Heart left ventricle (tissue), 16 donors: ENCODE measurements at regions of chr11 and their contacts with region 1.

Region 1: GRCh38 chr11:59822989-59823566 is 12.5 kb upstream of the MRPL16 start:
- DNase-seq: peak in 1 of 5 donors; percentile 30
- ATAC-seq: peak in 3 of 4 donors; percentile 86 to 88 (median 87)
- H3K4me3 ChIP-seq: no peak overlapping the region
- H3K27ac ChIP-seq: no peak overlapping the region
- H3K4me1 ChIP-seq: peaks cover 0 to 15% (median 0%) of the 10 kb centered on the region in 12 donors
- H3K27me3 ChIP-seq: no peaks in the 10 kb centered on the region
- CTCF ChIP-seq: peak; percentile 46 to 70 (median 63)
- POLR2A ChIP-seq: no peak

Region 2: DNA sequence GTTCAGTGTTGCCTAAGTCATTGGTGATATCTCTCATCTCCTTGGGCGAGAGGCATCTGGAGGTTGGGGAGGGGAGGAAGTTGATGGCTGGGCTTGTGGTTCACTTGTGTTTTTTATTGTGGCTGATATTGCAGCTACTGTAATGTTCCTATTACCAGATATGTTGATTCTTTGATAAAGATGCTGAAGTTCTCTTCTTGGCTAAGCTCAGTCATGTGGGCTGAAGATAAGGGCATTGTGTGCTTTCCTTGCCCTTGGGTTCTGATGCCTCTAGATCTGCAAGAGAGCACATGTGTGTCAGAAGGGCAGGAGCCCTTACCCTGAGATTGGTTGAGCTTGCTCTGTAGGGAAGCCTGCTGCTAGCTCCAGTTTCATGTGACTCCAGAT is 55.9 kb before region 1 on chr11:
- intact Hi-C with region 1: no loop called
- DNase-seq: no peak
- ATAC-seq: peak in 1 of 4 donors; percentile 19
- H3K4me3 ChIP-seq: no peak overlapping the region
- H3K27ac ChIP-seq: peak overlapping the region in 4 of 12 donors; percentile 11 to 54 (median 27)
- H3K4me1 ChIP-seq: peaks cover 0 to 69% (median 44%) of the 10 kb centered on the region in 12 donors
- H3K27me3 ChIP-seq: no peaks in the 10 kb centered on the region
- CTCF ChIP-seq: no peak
- POLR2A ChIP-seq: no peak

Region 3: GRCh38 chr11:59918987-59919589 is 96.0 kb after region 1 on chr11:
- intact Hi-C with region 1: loop called in 5 of 10 experiments (anchors 5 to 10 kb)
- DNase-seq: no peak
- ATAC-seq: no peak
- H3K4me3 ChIP-seq: no peak overlapping the region
- H3K27ac ChIP-seq: no peak overlapping the region
- H3K4me1 ChIP-seq: no peaks in the 10 kb centered on the region
- H3K27me3 ChIP-seq: no peaks in the 10 kb centered on the region
- CTCF ChIP-seq: peak in 10 of 12 donors; percentile 8 to 47 (median 37)
- POLR2A ChIP-seq: no peak

Region 4: GRCh38 chr11:60130496-60130895 is 307.4 kb after region 1 on chr11:
- intact Hi-C with region 1: loop called in 8 of 10 experiments (anchors 2 to 10 kb)
- DNase-seq: no peak
- ATAC-seq: peak in 2 of 4 donors; percentile 45 to 58
- H3K4me3 ChIP-seq: no peak overlapping the region
- H3K27ac ChIP-seq: no peak overlapping the region
- H3K4me1 ChIP-seq: no peaks in the 10 kb centered on the region
- H3K27me3 ChIP-seq: no peaks in the 10 kb centered on the region
- CTCF ChIP-seq: peak in 10 of 12 donors; percentile 6 to 45 (median 32)
- POLR2A ChIP-seq: no peak

Region 5: GRCh38 chr11:60193687-60194433 is 370.8 kb after region 1 on chr11:
- intact Hi-C with region 1: loop called in 6 of 10 experiments (anchors 2 to 5 kb)
- DNase-seq: peak in 3 of 5 donors; percentile 49 to 56 (median 51)
- ATAC-seq: peak; percentile 37 to 90 (median 80)
- H3K4me3 ChIP-seq: no peak overlapping the region
- H3K27ac ChIP-seq: peak overlapping the region in 5 of 12 donors; percentile 9 to 91 (median 61)
- H3K4me1 ChIP-seq: peaks cover 0 to 20% (median 0%) of the 10 kb centered on the region in 12 donors
- H3K27me3 ChIP-seq: peaks cover 0 to 5% (median 0%) of the 10 kb centered on the region in 9 donors
- CTCF ChIP-seq: peak; percentile 73 to 88 (median 81)
- POLR2A ChIP-seq: no peak

Region 6: DNA sequence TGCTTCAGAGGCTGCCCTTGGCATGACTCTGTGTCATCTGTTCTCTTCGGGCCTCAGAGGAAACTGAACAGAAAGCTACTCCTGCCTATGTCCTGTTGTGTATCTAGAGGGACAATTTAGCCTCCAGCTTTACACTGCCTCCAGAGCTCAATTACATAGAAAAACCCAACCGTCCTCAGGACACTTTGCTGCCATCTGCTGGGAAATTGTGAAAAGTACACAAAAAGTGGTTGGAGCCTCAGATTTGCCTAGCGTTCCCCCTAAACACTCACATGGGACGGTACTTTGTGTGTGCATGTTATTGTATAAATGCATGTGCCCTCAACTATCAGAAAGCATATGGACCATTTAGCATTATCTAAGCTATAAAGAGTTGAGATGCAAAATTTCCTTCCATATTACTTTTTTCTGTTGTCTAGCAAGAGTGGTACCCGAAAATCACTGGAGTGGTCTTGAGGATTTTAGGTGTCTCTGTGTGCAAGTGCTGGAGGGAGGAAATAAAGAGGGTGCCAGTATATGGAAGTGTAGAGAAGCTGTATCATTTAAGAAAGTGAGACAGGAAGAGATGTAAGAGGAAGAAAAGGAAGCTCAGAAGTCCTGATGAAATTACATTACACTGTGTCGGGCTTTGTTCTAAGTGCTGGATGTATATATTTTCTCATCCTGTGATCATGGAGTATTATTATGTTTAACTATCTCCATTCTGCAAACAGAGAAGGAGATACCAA is 428.6 kb after region 1 on chr11:
- intact Hi-C with region 1: loop called in 6 of 10 experiments (anchors 2 to 10 kb)
- DNase-seq: no peak
- ATAC-seq: peak in 3 of 4 donors; percentile 55 to 62 (median 55)
- H3K4me3 ChIP-seq: no peak overlapping the region
- H3K27ac ChIP-seq: peak overlapping the region in 1 of 12 donors; percentile 77
- H3K4me1 ChIP-seq: peaks cover 0 to 24% (median 0%) of the 10 kb centered on the region in 12 donors
- H3K27me3 ChIP-seq: peaks cover 0 to 7% (median 0%) of the 10 kb centered on the region in 9 donors
- CTCF ChIP-seq: peak in 9 of 12 donors; percentile 17 to 73 (median 39)
- POLR2A ChIP-seq: no peak

Region 7: GRCh38 chr11:60615497-60615896 is 792.4 kb after region 1 on chr11:
- intact Hi-C with region 1: loop called in 1 of 10 experiments (anchors 5 kb)
- DNase-seq: no peak
- ATAC-seq: no peak
- H3K4me3 ChIP-seq: no peak overlapping the region
- H3K27ac ChIP-seq: no peak overlapping the region
- H3K4me1 ChIP-seq: no peaks in the 10 kb centered on the region
- H3K27me3 ChIP-seq: peaks cover 0 to 7% (median 0%) of the 10 kb centered on the region in 9 donors
- CTCF ChIP-seq: no peak
- POLR2A ChIP-seq: no peak